Activated T-helper 1 cell treated with anti-CD3 and anti-CD28 coated beads, Interleukin-12 subunit alpha, Interleukin-12 subunit beta, Interleukin-2, Interleukin-4 antibody, amounts not matched to agents 30 ng/mL and 10 ng/mL and 1 ng/mL, durations not matched to agents 14 hours and 24 hours and 36 hours (primary cell): ENCODE measurements at regions of chr4 and their contacts with region 1.

Region 1: DNA sequence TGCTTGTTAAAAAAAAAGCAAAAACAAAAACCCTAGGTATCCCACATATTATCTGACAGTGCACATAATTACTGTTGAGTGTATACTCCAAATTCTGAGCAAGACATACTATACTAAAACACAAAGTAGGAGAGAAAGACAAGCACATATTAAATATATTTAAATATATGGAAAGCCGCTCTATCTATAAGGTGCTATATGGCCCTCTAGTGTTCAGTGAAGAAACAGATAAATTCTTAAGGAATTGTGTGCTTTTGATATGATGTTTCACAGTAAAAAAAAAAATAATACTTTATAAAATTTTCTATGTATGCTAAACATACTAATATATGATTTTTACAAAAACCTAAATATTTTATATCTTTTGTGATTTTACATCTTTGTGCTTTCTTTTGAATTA is 137.8 kb downstream of the FBXW7 start:
- DNase-seq: no peak
- H3K4me3 Mint-ChIP-seq: no peak overlapping the region
- H3K27ac Mint-ChIP-seq: no peak overlapping the region
- H3K4me1 Mint-ChIP-seq: peaks cover 37% of the 10 kb centered on the region
- H3K27me3 Mint-ChIP-seq: no peaks in the 10 kb centered on the region

Region 2: GRCh38 chr4:152374606-152375285 is 23.3 kb before region 1 on chr4:
- intact Hi-C with region 1: no loop called
- DNase-seq: no peak
- H3K4me3 Mint-ChIP-seq: no peak overlapping the region
- H3K27ac Mint-ChIP-seq: no peak overlapping the region
- H3K4me1 Mint-ChIP-seq: peaks cover 19% of the 10 kb centered on the region
- H3K27me3 Mint-ChIP-seq: no peaks in the 10 kb centered on the region

Region 3: GRCh38 chr4:152448038-152448707 is 50.1 kb after region 1 on chr4:
- intact Hi-C with region 1: loop called (anchors 5 kb)
- DNase-seq: no peak
- H3K4me3 Mint-ChIP-seq: no peak overlapping the region
- H3K27ac Mint-ChIP-seq: no peak overlapping the region
- H3K4me1 Mint-ChIP-seq: no peaks in the 10 kb centered on the region
- H3K27me3 Mint-ChIP-seq: no peaks in the 10 kb centered on the region